Endothelial cell of umbilical vein (primary cell): ENCODE measurements at regions of chr17 and their contacts with region 1.

Region 1: GRCh38 chr17:77145612-77146245 is 5.0 kb downstream of the SEC14L1 start:
- DNase-seq: peak; percentile 80
- H3K4me3 ChIP-seq: peak overlapping the region in 2 of 3 experiments; percentile 23 to 67
- H3K27ac ChIP-seq: peak overlapping the region; percentile 97
- H3K4me1 ChIP-seq: peaks cover 84% of the 10 kb centered on the region
- H3K27me3 ChIP-seq: no peaks in the 10 kb centered on the region
- CTCF ChIP-seq: peak in 1 of 2 donors; percentile 47
- POLR2A ChIP-seq: peak; percentile 23

Region 2: GRCh38 chr17:77088455-77089123 is 57.1 kb before region 1 on chr17:
- CTCF ChIA-PET with region 1: interaction called, 28 read pairs
- POLR2A ChIA-PET with region 1: interaction called, 4 read pairs
- dilution Hi-C with region 1: no loop called
- intact Hi-C with region 1: loop called (anchors 1 kb)
- DNase-seq: peak; percentile 96
- H3K4me3 ChIP-seq: peak overlapping the region; percentile 68 to 92 (median 73)
- H3K27ac ChIP-seq: peak overlapping the region; percentile 94
- H3K4me1 ChIP-seq: peaks cover 56% of the 10 kb centered on the region
- H3K27me3 ChIP-seq: no peaks in the 10 kb centered on the region
- CTCF ChIP-seq: peak; percentile 78 to 95
- POLR2A ChIP-seq: peak; percentile 80

Region 3: DNA sequence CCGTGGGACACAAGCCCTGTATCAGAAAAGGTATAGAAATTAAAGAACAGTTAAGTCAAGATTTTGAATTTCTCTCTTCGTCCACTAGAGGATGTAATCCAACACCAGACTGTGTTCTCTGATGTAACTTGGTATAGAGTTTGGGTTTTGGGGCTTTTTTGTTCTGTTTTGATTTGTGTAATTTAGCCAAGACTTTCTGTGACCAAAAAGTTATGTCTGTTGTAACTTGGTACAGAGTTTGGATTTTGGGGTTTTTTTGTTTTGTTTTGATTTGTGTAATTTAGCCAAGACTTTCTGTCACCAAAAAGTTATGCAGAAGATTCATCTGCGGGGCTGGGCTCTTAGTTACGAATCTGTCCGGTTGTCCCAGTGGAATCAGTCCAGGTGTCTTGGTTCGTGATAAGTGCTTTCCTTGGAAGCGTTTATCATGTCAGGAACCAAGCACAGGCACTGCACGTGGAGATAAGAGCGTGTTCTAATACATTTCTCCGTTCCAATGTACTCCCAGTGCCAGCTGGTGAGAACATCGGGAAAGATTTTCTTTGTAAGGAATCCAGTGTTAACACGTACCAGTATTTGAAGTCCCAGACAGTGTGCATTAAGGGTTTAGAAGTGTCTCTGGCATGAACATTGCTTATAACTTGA is 49.0 kb before region 1 on chr17:
- CTCF ChIA-PET with region 1: interaction called, 20 read pairs
- POLR2A ChIA-PET with region 1: interaction called, 5 read pairs
- dilution Hi-C with region 1: no loop called
- intact Hi-C with region 1: loop called (anchors 1 kb)
- DNase-seq: peak; percentile 78
- H3K4me3 ChIP-seq: no peak overlapping the region
- H3K27ac ChIP-seq: peak overlapping the region; percentile 86
- H3K4me1 ChIP-seq: peaks cover 50% of the 10 kb centered on the region
- H3K27me3 ChIP-seq: no peaks in the 10 kb centered on the region
- CTCF ChIP-seq: peak; percentile 47 to 58
- POLR2A ChIP-seq: peak; percentile 35

Region 4: DNA sequence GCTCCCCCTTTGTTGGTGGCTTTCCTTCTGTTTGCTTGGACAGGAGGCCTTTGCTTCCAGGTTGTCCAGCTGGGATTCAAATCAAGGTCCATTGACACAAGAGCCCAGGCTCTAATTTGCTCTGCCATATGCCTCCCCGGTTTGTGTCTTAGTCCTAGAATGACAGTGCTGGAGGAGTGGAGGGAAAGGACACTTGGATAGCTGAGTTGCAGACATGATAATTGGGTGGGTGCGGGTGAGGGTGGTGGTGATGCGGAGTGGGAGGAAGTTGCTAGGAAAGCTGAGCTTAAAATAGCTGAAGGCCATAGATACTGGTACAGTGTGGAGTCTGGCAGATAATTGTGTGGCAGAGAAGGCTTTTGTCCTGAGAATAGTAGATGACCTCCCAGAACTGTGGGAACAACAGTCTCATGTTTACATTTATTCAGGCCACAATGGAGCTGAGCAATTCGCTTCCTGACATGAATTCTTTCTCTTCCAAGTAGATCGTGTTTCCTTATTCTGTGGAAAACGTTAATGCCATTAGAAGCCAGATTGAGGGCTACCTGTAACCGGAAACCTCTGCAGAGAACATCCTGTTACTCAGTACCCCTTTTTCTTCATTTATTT is 18.9 kb after region 1 on chr17:
- CTCF ChIA-PET with region 1: interaction called, 11 read pairs
- POLR2A ChIA-PET with region 1: no interaction called
- dilution Hi-C with region 1: no loop called
- intact Hi-C with region 1: no loop called
- DNase-seq: peak; percentile 93
- H3K4me3 ChIP-seq: peak overlapping the region in 1 of 3 experiments; percentile 25
- H3K27ac ChIP-seq: peak overlapping the region; percentile 88
- H3K4me1 ChIP-seq: peaks cover 71% of the 10 kb centered on the region
- H3K27me3 ChIP-seq: no peaks in the 10 kb centered on the region
- CTCF ChIP-seq: no peak
- POLR2A ChIP-seq: no peak

Region 5: GRCh38 chr17:77208217-77208808 is 62.6 kb after region 1 on chr17:
- CTCF ChIA-PET with region 1: interaction called, 8 read pairs
- POLR2A ChIA-PET with region 1: interaction called, 3 read pairs
- dilution Hi-C with region 1: no loop called
- intact Hi-C with region 1: loop called (anchors 2 kb)
- DNase-seq: peak; percentile 78
- H3K4me3 ChIP-seq: no peak overlapping the region
- H3K27ac ChIP-seq: peak overlapping the region; percentile 91
- H3K4me1 ChIP-seq: peaks cover 58% of the 10 kb centered on the region
- H3K27me3 ChIP-seq: no peaks in the 10 kb centered on the region
- CTCF ChIP-seq: peak in 1 of 2 donors; percentile 49
- POLR2A ChIP-seq: peak; percentile 42

Region 6: DNA sequence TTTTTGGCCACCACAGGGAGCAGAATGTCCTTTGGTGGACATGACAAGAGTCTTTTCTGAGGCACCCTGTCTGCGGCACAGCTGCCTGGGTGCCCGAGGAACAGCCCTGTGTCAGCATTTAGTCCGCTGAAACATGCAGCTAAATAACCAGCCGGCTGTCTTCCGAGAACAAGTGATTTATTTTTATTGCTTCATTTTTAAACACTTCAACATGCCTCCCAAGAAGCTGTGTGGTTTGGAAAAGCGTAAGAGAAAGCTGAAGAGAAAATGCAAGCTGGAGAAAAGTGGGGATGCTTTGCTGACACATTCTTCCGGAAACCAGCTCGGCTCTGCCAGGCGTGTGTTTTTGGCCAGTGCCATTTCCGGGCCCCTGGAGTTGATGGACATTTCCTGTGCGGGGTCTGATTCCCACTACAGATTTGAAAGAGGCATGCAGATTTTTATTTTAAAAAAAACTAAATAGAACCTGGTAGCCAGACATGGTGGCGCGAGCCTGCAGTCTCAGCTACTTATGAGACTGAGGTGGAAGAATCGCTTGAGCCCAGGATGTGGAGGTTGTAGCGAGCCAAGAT is 89.7 kb after region 1 on chr17:
- CTCF ChIA-PET with region 1: interaction called, 5 read pairs
- POLR2A ChIA-PET with region 1: no interaction called
- dilution Hi-C with region 1: no loop called
- intact Hi-C with region 1: loop called (anchors 5 kb)
- DNase-seq: peak; percentile 73
- H3K4me3 ChIP-seq: peak overlapping the region in 1 of 3 experiments; percentile 15
- H3K27ac ChIP-seq: peak overlapping the region; percentile 81
- H3K4me1 ChIP-seq: peaks cover 23% of the 10 kb centered on the region
- H3K27me3 ChIP-seq: no peaks in the 10 kb centered on the region
- CTCF ChIP-seq: no peak
- POLR2A ChIP-seq: peak; percentile 57